Natural killer cell (primary cell): ENCODE measurements at regions of chr12 and their contacts with region 1.

Region 1: DNA sequence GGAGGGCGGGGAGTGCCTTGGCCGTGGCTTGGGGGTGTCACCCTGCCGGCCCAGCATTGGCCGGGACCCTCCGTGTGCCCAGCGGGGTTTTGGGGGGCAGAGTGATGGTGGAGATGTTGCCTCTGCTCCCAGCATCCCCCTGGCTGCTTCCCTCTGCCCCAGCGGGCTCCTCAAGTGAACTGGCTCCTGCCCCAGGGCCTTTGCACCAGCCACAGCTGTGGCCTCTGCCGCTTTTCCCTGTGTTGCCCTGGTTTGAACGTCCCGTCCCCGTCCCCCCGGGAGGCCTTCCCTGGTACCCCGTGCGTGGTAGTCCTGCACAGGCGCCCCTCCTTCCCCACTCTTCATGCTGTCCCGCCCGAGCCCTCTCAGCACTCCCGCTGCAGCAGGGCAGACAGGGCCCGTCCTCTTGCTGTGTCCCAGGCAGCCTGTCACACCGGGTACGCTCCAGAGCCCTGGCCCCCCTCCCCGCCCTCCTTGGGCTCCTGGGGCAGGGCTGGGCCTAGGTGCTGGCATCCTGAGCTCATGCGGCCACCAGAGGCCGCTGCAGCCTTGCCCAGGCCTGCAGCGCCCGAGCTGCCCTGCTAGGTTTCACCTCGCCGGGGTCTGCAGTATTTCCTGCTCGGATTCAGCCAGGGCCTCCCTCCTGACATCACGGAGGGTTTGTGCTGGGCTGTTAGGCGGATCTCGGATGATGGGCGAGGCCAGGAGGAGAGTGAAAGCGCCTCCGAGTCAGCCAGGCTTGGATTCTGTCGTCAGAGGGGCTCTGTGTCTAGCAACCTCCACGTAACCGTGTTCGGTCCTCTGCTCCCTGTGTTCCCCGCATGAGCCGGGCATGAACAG is 9.5 kb downstream of the NOC4L start:
- DNase-seq: peak; percentile 60 to 91
- ATAC-seq: peak; percentile 88 to 94 (median 92)
- H3K4me3 ChIP-seq: no peak overlapping the region
- H3K4me3 Mint-ChIP-seq: no peak overlapping the region
- H3K27ac ChIP-seq: no peak overlapping the region
- H3K27ac Mint-ChIP-seq: no peak overlapping the region
- H3K4me1 ChIP-seq: peaks cover 10% of the 10 kb centered on the region
- H3K4me1 Mint-ChIP-seq: peaks cover 0 to 5% of the 10 kb centered on the region in 2 donors
- H3K27me3 ChIP-seq: no peaks in the 10 kb centered on the region
- H3K27me3 Mint-ChIP-seq: no peaks in the 10 kb centered on the region
- CTCF ChIP-seq: peak; percentile 88

Region 2: DNA sequence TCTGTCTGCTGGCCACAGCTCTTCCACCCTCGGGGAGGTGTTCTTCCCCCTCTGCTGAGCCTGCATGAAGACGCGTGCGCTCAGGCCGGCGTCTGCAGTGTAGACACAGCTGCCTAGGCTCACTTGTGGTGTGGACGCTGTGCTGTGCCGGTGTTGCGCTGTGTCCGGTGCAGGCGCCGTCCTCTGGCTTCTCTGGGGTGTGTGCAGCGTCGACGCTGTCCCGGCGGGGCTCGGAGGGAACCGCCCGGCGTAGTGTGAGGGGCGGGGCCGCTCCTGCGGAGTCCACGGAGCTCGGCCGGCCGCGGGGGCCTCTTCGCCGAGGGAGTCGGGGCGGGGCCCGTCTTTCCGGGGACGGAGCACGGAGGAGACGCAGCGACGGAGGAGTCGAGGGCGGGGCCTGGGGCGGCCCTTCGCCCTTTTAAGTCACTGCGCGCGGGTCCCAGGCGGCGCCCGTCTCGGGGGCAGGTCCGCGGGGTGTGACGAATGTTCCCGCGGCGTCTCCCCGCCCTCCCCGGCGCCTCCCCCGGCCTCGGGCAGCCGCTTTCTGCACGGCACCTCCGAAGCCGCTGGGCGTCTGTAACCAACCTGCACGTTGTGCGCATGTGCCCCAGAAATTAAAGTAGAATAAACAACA is 35.8 kb after region 1 on chr12:
- intact Hi-C with region 1: loop called (anchors 5 kb)
- DNase-seq: peak; percentile 83 to 96
- ATAC-seq: peak; percentile 92 to 96 (median 92)
- H3K4me3 ChIP-seq: peak overlapping the region; percentile 67
- H3K4me3 Mint-ChIP-seq: peak overlapping the region; percentile 88
- H3K27ac ChIP-seq: peak overlapping the region; percentile 78
- H3K27ac Mint-ChIP-seq: peak overlapping the region; percentile 76 to 87
- H3K4me1 ChIP-seq: peaks cover 53% of the 10 kb centered on the region
- H3K4me1 Mint-ChIP-seq: peaks cover 27 to 28% of the 10 kb centered on the region in 2 donors
- H3K27me3 ChIP-seq: no peaks in the 10 kb centered on the region
- H3K27me3 Mint-ChIP-seq: peaks cover 0 to 2% of the 10 kb centered on the region in 2 donors
- CTCF ChIP-seq: no peak

Region 3: GRCh38 chr12:132218915-132219314 is 65.2 kb after region 1 on chr12:
- intact Hi-C with region 1: loop called (anchors 1 kb)
- DNase-seq: peak in 1 of 2 donors; percentile 79
- ATAC-seq: peak in 2 of 3 donors; percentile 42 to 52
- H3K4me3 ChIP-seq: no peak overlapping the region
- H3K4me3 Mint-ChIP-seq: no peak overlapping the region
- H3K27ac ChIP-seq: no peak overlapping the region
- H3K27ac Mint-ChIP-seq: no peak overlapping the region
- H3K4me1 ChIP-seq: peaks cover 13% of the 10 kb centered on the region
- H3K4me1 Mint-ChIP-seq: peaks cover 9 to 10% of the 10 kb centered on the region in 2 donors
- H3K27me3 ChIP-seq: peaks cover 4% of the 10 kb centered on the region
- H3K27me3 Mint-ChIP-seq: peaks cover 0 to 10% of the 10 kb centered on the region in 2 donors
- CTCF ChIP-seq: peak; percentile 15

Region 4: DNA sequence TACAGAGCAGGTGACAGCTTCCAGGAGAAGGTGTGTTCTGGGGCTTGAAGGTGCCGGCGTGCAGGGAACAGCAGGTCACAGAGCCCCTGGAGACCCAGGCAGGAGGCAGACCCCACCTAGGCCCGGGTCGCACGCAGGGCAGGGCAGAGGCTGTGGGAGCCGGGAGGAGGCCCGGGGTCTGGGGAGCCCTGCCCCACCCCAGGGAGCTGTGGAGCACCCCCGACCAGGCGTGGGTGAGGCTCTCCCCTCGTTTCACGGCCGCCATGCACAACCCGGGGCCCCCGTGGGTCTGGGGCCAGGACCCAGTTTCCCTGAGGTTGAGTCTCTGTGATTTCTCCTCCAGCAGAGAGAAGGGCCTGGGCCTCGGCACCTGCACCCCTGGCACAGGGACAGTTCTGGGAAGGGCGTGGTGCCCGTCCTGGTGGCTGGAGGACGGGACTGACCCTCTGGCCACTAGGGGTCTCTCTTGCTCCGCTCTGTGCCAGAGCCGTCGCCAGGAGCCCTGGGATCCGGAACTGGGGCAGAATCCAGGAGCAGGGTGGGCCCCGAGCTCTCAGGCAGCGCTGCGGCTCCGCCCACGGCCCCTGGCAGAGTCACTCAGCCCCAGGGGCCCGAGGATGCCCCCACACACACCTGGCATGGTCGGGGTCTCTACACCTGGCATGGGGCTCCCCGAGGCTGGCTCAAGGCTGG is 261.1 kb after region 1 on chr12:
- intact Hi-C with region 1: loop called (anchors 1 kb)
- DNase-seq: peak; percentile 67 to 89
- ATAC-seq: peak; percentile 78 to 96 (median 96)
- H3K4me3 ChIP-seq: no peak overlapping the region
- H3K4me3 Mint-ChIP-seq: no peak overlapping the region
- H3K27ac ChIP-seq: no peak overlapping the region
- H3K27ac Mint-ChIP-seq: no peak overlapping the region
- H3K4me1 ChIP-seq: peaks cover 11% of the 10 kb centered on the region
- H3K4me1 Mint-ChIP-seq: peaks cover 0 to 4% of the 10 kb centered on the region in 2 donors
- H3K27me3 ChIP-seq: no peaks in the 10 kb centered on the region
- H3K27me3 Mint-ChIP-seq: peaks cover 0 to 3% of the 10 kb centered on the region in 2 donors
- CTCF ChIP-seq: peak; percentile 93

Region 5: GRCh38 chr12:132523576-132524331 is 370.0 kb after region 1 on chr12:
- intact Hi-C with region 1: loop called (anchors 10 kb)
- DNase-seq: peak; percentile 76 to 84
- ATAC-seq: peak; percentile 79 to 87 (median 80)
- H3K4me3 ChIP-seq: no peak overlapping the region
- H3K4me3 Mint-ChIP-seq: no peak overlapping the region
- H3K27ac ChIP-seq: no peak overlapping the region
- H3K27ac Mint-ChIP-seq: no peak overlapping the region
- H3K4me1 ChIP-seq: peaks cover 16% of the 10 kb centered on the region
- H3K4me1 Mint-ChIP-seq: peaks cover 0 to 30% of the 10 kb centered on the region in 2 donors
- H3K27me3 ChIP-seq: no peaks in the 10 kb centered on the region
- H3K27me3 Mint-ChIP-seq: no peaks in the 10 kb centered on the region
- CTCF ChIP-seq: peak; percentile 90

Region 6: GRCh38 chr12:132614861-132615578 is 461.3 kb after region 1 on chr12:
- intact Hi-C with region 1: loop called (anchors 1 kb)
- DNase-seq: peak; percentile 77 to 91
- ATAC-seq: peak; percentile 82 to 94 (median 93)
- H3K4me3 ChIP-seq: no peak overlapping the region
- H3K4me3 Mint-ChIP-seq: no peak overlapping the region
- H3K27ac ChIP-seq: no peak overlapping the region
- H3K27ac Mint-ChIP-seq: no peak overlapping the region
- H3K4me1 ChIP-seq: peaks cover 10% of the 10 kb centered on the region
- H3K4me1 Mint-ChIP-seq: peaks cover 10 to 16% of the 10 kb centered on the region in 2 donors
- H3K27me3 ChIP-seq: peaks cover 27% of the 10 kb centered on the region
- H3K27me3 Mint-ChIP-seq: peaks cover 32 to 39% of the 10 kb centered on the region in 2 donors
- CTCF ChIP-seq: peak; percentile 86